Natural killer cell (primary cell): ENCODE measurements at regions of chr16 and their contacts with region 1.

Region 1: DNA sequence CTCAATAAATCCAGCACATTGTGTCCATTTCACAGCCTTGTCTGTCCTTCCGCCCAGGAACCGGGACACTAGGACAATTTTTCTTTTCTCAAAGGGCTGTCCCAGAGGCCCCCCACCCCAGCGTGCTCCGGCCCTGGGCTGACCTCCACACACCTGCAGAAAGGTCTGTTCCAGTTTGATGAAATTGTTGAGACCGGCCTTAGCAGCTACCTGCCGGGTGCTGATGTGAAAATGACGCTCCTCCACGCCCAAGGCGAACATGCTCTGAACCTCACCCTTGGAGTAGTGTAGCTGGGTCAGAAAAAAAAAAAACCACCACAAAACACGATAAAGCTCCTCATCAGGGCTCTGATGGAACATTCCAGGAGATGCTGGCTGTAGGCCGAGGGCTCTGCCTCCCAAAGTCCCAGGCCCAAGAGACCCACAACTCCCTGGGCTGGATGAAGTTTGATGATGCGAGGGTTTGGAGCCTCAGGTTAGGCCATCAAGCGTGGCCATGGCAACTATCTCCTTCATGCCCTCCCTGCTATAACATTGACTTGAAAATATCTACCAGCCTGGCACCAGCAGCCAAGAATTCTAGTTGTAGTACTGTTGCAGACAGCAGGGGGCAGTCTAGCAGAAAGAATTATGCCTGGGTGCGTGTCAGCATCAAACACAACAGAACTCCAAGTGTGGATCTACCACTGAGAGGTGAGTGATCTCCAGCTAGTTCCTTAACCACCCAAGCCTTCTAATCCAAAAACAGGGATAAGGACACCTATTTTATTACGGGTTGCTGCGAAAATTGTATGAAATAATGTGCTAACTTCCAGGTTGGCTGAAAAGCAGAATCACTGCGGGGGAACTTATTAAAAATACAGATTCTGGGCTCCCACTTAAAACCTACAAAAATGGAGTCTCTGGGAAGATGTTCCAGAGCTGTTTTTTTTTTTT is 62.1 kb downstream of the RMI2 start:
- DNase-seq: peak; percentile 57 to 81
- ATAC-seq: peak; percentile 67 to 91 (median 79)
- H3K4me3 ChIP-seq: no peak overlapping the region
- H3K4me3 Mint-ChIP-seq: no peak overlapping the region
- H3K27ac ChIP-seq: no peak overlapping the region
- H3K27ac Mint-ChIP-seq: no peak overlapping the region
- H3K4me1 ChIP-seq: peaks cover 4% of the 10 kb centered on the region
- H3K4me1 Mint-ChIP-seq: peaks cover 0 to 3% of the 10 kb centered on the region in 2 donors
- H3K27me3 ChIP-seq: no peaks in the 10 kb centered on the region
- H3K27me3 Mint-ChIP-seq: no peaks in the 10 kb centered on the region
- CTCF ChIP-seq: peak; percentile 76

Region 2: GRCh38 chr16:10954903-10955302 is 452.4 kb before region 1 on chr16:
- intact Hi-C with region 1: loop called (anchors 2 kb)
- DNase-seq: no peak
- ATAC-seq: no peak
- H3K4me3 ChIP-seq: no peak overlapping the region
- H3K4me3 Mint-ChIP-seq: no peak overlapping the region
- H3K27ac ChIP-seq: no peak overlapping the region
- H3K27ac Mint-ChIP-seq: peak overlapping the region in 1 of 2 donors; percentile 3
- H3K4me1 ChIP-seq: peaks cover 16% of the 10 kb centered on the region
- H3K4me1 Mint-ChIP-seq: peaks cover 12 to 23% of the 10 kb centered on the region in 2 donors
- H3K27me3 ChIP-seq: no peaks in the 10 kb centered on the region
- H3K27me3 Mint-ChIP-seq: no peaks in the 10 kb centered on the region
- CTCF ChIP-seq: no peak

Region 3: GRCh38 chr16:10964039-10964890 is 443.1 kb before region 1 on chr16:
- intact Hi-C with region 1: loop called (anchors 2 kb)
- DNase-seq: peak; percentile 76 to 91
- ATAC-seq: peak; percentile 85 to 97 (median 94)
- H3K4me3 ChIP-seq: no peak overlapping the region
- H3K4me3 Mint-ChIP-seq: no peak overlapping the region
- H3K27ac ChIP-seq: no peak overlapping the region
- H3K27ac Mint-ChIP-seq: no peak overlapping the region
- H3K4me1 ChIP-seq: peaks cover 11% of the 10 kb centered on the region
- H3K4me1 Mint-ChIP-seq: peaks cover 8 to 12% of the 10 kb centered on the region in 2 donors
- H3K27me3 ChIP-seq: no peaks in the 10 kb centered on the region
- H3K27me3 Mint-ChIP-seq: no peaks in the 10 kb centered on the region
- CTCF ChIP-seq: peak; percentile 96

Region 4: DNA sequence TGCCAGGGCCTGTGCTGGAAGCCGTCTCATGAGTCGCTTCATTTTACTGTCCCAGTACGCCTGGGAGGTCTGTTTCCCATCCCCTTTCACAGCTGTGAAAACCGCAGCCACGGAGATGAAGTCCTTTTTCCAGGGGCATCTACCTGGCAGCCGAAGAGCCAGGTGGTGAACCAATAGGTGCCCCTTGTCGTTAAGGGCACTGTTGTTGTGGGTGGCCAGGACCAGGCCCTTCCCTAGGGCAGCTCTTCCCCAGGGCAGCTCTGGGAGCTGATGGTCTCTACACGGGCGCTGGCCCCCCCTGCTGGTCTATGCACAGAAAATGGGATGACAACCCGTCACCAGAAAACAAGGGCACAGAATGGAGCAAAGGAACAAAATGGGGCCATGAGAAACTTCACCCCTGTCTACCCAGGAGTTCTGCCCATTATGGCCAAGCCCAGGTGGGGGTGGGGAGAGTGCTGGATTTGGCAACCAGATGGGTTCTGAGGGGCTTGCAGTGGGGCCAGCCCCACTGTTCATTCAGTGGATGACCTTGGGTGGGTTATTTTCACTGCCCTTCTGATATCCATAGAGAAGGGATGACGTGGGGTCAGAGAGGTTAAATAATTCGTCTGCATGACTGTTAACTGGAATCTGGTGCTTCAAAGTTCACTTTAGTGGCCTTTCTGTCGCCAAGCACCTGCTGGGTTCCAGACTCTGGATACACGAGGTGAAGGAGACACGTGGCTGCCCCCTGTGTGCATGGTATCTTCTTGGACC is 50.6 kb before region 1 on chr16:
- intact Hi-C with region 1: no loop called
- DNase-seq: peak; percentile 41 to 72
- ATAC-seq: no peak
- H3K4me3 ChIP-seq: no peak overlapping the region
- H3K4me3 Mint-ChIP-seq: no peak overlapping the region
- H3K27ac ChIP-seq: no peak overlapping the region
- H3K27ac Mint-ChIP-seq: no peak overlapping the region
- H3K4me1 ChIP-seq: peaks cover 40% of the 10 kb centered on the region
- H3K4me1 Mint-ChIP-seq: peaks cover 37 to 39% of the 10 kb centered on the region in 2 donors
- H3K27me3 ChIP-seq: peaks cover 60% of the 10 kb centered on the region
- H3K27me3 Mint-ChIP-seq: peaks cover 68 to 71% of the 10 kb centered on the region in 2 donors
- CTCF ChIP-seq: peak; percentile 45

Region 5: DNA sequence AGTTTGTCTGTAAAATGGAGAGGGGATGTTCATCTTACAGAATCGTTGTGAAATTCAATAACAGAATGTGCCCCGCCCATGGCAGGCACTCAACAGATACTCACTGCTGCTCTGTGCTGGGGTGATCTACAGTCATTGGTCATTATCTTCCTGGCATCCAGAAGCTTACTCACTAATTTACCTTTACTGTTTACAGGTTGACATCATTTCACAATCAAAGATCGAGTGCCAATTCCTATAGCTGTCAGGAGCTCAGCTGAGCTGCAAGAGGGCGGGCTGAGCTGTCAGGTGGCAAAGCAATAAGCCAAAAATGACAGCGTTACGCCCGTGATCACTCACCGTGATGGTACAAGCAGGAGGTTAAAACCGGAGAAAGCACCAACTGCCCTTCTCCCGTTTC is 128.2 kb after region 1 on chr16:
- intact Hi-C with region 1: loop called (anchors 1 kb)
- DNase-seq: no peak
- ATAC-seq: no peak
- H3K4me3 ChIP-seq: no peak overlapping the region
- H3K4me3 Mint-ChIP-seq: peak overlapping the region; percentile 50
- H3K27ac ChIP-seq: no peak overlapping the region
- H3K27ac Mint-ChIP-seq: peak overlapping the region in 1 of 2 donors; percentile 45
- H3K4me1 ChIP-seq: peaks cover 43% of the 10 kb centered on the region
- H3K4me1 Mint-ChIP-seq: peaks cover 45 to 46% of the 10 kb centered on the region in 2 donors
- H3K27me3 ChIP-seq: no peaks in the 10 kb centered on the region
- H3K27me3 Mint-ChIP-seq: peaks cover 8% of the 10 kb centered on the region in 2 donors
- CTCF ChIP-seq: no peak

Region 6: GRCh38 chr16:11639925-11640899 is 232.9 kb after region 1 on chr16:
- intact Hi-C with region 1: loop called (anchors 5 kb)
- DNase-seq: peak; percentile 28 to 39
- ATAC-seq: peak; percentile 72 to 92 (median 88)
- H3K4me3 ChIP-seq: no peak overlapping the region
- H3K4me3 Mint-ChIP-seq: no peak overlapping the region
- H3K27ac ChIP-seq: peak overlapping the region; percentile 66
- H3K27ac Mint-ChIP-seq: peak overlapping the region; percentile 11 to 33
- H3K4me1 ChIP-seq: peaks cover 24% of the 10 kb centered on the region
- H3K4me1 Mint-ChIP-seq: peaks cover 23 to 32% of the 10 kb centered on the region in 2 donors
- H3K27me3 ChIP-seq: no peaks in the 10 kb centered on the region
- H3K27me3 Mint-ChIP-seq: peaks cover 0 to 11% of the 10 kb centered on the region in 2 donors
- CTCF ChIP-seq: no peak

Region 7: DNA sequence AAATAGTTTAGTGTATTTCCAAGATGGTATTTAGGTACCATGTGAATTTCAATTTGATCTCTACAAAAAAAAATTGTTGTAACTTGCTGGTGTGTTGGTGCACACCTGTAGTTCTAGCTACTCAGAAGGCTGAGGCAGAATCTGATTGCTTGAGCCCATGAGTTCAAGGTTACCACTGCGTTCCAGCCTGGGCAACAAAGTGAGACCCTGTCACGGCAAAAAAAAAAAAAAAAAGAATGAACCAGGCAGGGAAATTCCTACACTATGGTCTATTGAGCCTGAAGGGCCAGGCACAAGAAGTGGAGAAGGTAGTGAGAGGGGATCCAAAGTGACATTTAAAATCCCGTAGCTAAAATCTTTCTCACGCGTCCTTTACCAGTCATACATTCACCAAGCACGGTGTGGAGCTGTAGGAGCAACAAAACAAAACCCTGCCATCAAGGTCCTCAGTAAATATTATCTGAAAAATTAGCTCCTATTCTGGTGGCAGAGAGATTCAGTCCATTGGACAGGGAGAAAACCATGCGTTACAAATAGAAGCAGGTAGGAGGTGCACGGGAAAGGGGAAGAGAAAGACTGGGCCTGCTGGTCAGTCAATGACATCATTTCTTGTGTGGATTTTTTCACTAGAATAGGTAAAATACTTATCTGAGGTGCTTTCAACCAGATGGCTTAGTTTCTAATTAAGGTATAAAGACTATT is 308.1 kb after region 1 on chr16:
- intact Hi-C with region 1: loop called (anchors 1 kb)
- DNase-seq: no peak
- ATAC-seq: no peak
- H3K4me3 ChIP-seq: no peak overlapping the region
- H3K4me3 Mint-ChIP-seq: no peak overlapping the region
- H3K27ac ChIP-seq: no peak overlapping the region
- H3K27ac Mint-ChIP-seq: no peak overlapping the region
- H3K4me1 ChIP-seq: peaks cover 3% of the 10 kb centered on the region
- H3K4me1 Mint-ChIP-seq: peaks cover 5 to 12% of the 10 kb centered on the region in 2 donors
- H3K27me3 ChIP-seq: no peaks in the 10 kb centered on the region
- H3K27me3 Mint-ChIP-seq: no peaks in the 10 kb centered on the region
- CTCF ChIP-seq: no peak

Region 8: DNA sequence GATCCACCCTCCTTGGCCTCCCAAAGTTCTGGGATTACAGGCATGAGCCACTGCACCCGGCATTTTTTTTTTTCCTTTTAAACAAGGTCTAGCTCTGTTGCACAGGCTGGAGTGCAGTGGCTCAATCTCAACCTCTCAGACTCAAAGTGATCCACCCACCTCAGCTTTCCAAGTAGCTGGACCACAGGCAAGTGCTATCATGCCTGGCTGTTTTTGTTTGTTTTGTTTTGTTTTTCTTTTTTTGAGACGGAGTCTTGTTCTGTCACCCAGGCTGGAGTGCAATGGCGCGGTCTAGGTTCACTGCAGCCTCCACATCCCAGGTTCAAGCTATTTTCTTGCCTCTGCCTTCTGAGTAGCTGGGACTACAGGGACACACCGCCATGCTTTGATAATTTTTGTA is 408.8 kb after region 1 on chr16:
- intact Hi-C with region 1: loop called (anchors 1 kb)
- DNase-seq: no peak
- ATAC-seq: no peak
- H3K4me3 ChIP-seq: no peak overlapping the region
- H3K4me3 Mint-ChIP-seq: no peak overlapping the region
- H3K27ac ChIP-seq: no peak overlapping the region
- H3K27ac Mint-ChIP-seq: no peak overlapping the region
- H3K4me1 ChIP-seq: no peaks in the 10 kb centered on the region
- H3K4me1 Mint-ChIP-seq: no peaks in the 10 kb centered on the region
- H3K27me3 ChIP-seq: no peaks in the 10 kb centered on the region
- H3K27me3 Mint-ChIP-seq: no peaks in the 10 kb centered on the region
- CTCF ChIP-seq: no peak